Aorta (tissue), 5 donors: ENCODE measurements at regions of chr1 and their contacts with region 1.

Region 1: GRCh38 chr1:225735252-225736149 is 42.1 kb upstream of the SRP9 start:
- DNase-seq: peak; percentile 84 to 89
- ATAC-seq: peak; percentile 89
- H3K4me3 ChIP-seq: no peak overlapping the region
- H3K27ac ChIP-seq: peak overlapping the region; percentile 85 to 91
- H3K4me1 ChIP-seq: peaks cover 3 to 5% of the 10 kb centered on the region in 2 donors
- H3K27me3 ChIP-seq: no peaks in the 10 kb centered on the region

Region 2: GRCh38 chr1:225689882-225690459 is 45.5 kb before region 1 on chr1:
- intact Hi-C with region 1: no loop called
- DNase-seq: no peak
- ATAC-seq: no peak
- H3K4me3 ChIP-seq: no peak overlapping the region
- H3K27ac ChIP-seq: no peak overlapping the region
- H3K4me1 ChIP-seq: peaks cover 4 to 7% of the 10 kb centered on the region in 2 donors
- H3K27me3 ChIP-seq: no peaks in the 10 kb centered on the region

Region 3: DNA sequence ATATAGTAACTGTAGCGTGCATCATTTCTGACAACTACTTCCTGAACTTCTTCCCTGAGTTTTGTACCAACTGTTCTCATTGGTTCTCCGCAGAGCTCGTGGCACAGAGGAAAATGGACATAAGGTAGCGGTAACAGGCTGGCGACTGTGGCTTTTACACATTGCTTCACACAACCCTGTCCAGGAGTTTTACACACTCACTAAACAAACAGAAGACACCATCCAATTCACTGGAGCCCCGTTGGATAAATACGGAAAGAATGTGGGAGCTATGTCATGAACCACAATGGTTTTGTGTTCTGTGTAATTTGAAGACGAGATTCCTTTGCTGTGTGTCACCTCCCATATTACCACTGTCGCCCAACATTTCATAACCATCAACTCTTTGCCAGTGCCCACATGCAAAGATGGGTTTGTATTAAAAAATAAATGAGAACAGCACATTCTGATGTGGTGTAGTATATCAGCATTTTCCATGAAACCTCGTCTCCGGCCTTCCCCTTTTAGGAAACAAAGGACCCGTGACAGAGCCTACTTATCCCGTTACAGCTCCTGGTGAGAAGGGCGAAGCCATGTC is 35.2 kb before region 1 on chr1:
- intact Hi-C with region 1: loop called in 1 of 2 experiments (anchors 5 kb)
- DNase-seq: peak in 1 of 2 donors; percentile 53
- ATAC-seq: peak; percentile 47
- H3K4me3 ChIP-seq: peak overlapping the region in 1 of 2 donors; percentile 18
- H3K27ac ChIP-seq: peak overlapping the region; percentile 91 to 96
- H3K4me1 ChIP-seq: peaks cover 6 to 8% of the 10 kb centered on the region in 2 donors
- H3K27me3 ChIP-seq: no peaks in the 10 kb centered on the region